Right ventricle myocardium inferior (tissue), 1 donor: ENCODE measurements at regions of chr1 and their contacts with region 1.

Region 1: DNA sequence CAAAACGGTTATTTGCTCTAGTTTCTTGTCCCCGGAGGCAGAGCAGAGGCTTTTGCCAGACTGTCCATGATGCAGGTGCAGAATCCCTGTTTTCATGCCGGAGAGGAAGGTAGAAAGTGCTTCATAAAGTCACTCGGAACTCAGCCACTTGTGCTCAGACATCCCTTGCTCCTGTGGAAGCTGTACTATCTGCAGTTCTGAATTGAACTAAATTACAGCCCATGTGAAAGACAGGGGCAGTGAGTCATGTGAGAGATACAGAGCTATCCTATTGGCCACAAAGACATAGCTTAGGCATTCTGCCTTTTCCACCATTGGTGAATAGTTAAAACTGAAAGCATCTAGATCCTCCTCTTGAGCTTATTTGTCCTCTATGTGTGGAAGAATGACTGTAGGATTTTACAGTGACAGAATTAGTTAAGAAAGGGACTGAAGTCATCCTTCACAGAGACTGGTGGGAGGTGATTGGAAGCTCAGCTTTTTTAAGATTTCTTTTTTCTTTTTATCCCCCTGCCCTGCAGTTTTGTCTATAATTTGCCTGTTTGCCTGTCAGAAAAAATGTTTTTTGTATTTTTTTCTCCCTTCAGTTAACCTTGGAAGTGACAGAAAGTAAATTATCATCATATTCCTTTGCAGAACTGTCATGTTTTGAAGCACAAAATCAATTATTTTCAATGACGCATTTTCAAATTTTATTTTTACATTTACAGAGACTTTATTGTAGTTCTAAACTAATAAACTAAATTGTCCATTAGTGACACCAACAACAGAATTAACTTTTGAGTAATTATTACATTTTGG is 298.6 kb downstream of the PTPRC start:
- DNase-seq: peak; percentile 49
- ATAC-seq: peak; percentile 98

Region 2: GRCh38 chr1:198850196-198850595 is 87.2 kb before region 1 on chr1:
- intact Hi-C with region 1: no loop called
- DNase-seq: no peak
- ATAC-seq: no peak

Region 3: DNA sequence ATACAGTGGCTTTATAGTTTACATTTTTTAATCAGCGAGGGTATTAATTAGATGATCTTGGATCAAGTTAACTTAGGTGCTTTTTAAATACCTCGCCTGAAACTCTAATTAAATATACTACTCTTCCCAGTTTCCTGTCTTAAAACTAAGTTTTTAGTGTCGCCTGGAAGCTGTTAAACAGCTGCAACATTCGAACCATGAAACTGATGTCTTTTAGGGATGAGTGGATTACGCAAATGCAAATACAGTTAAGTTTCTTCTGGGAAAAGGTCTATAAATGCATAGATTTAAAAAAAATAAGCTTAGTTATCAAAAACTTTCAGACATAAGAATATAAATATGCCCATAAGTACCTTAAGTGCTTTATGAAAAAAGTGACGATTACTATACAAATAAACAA is 70.2 kb before region 1 on chr1:
- intact Hi-C with region 1: loop called (anchors 5 kb)
- DNase-seq: no peak
- ATAC-seq: no peak

Region 4: DNA sequence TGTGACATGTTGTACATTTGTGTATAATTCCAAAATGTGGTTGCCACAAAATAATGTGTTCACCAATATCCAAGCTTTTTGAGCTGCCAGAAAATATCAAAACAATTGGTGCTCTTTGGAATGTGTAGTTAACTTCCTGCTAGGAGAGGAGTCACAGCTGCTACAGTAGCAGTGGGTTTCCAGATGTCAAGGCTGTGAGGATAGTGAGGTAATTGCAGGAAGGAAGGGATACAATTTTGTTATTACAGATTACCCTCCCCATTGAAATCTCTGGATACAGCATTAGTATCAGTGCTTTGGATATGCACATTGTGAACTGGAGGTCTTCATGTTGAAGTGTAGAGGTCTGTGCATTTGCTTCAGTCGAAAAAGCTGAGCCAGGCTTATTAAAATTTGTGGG is 45.4 kb before region 1 on chr1:
- intact Hi-C with region 1: loop called (anchors 5 kb)
- DNase-seq: no peak
- ATAC-seq: no peak

Region 5: DNA sequence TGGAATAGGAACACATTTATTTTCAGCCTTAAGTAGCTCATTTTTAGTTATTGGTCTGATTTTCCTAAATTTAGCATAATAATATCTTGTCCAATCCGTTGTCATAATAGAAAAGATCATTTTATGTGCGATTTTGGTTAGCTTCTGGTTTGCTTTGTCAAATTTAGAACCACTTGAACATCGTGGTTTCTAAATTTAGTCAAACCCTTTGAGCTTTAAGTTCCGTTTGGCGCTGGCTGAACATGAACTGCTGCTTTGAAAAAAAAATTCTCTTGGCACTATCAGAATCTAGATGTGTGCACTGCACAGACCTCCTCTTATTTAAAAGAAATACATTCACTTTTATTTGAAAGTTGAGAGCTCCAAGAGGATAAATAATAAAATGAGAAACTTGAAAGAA is 72.0 kb after region 1 on chr1:
- intact Hi-C with region 1: loop called (anchors 2 kb)
- DNase-seq: no peak
- ATAC-seq: no peak

Region 6: GRCh38 chr1:199182186-199182843 is 244.9 kb after region 1 on chr1:
- intact Hi-C with region 1: loop called (anchors 10 kb)
- DNase-seq: no peak
- ATAC-seq: peak; percentile 78